Activated CD4-positive, alpha-beta memory T cell treated with anti-CD3 and anti-CD28 coated beads, Interleukin-2, amount 10 ng/mL, durations not matched to agents 7 days and 5 days (primary cell): ENCODE measurements at regions of chr1 and their contacts with region 1.

Region 1: DNA sequence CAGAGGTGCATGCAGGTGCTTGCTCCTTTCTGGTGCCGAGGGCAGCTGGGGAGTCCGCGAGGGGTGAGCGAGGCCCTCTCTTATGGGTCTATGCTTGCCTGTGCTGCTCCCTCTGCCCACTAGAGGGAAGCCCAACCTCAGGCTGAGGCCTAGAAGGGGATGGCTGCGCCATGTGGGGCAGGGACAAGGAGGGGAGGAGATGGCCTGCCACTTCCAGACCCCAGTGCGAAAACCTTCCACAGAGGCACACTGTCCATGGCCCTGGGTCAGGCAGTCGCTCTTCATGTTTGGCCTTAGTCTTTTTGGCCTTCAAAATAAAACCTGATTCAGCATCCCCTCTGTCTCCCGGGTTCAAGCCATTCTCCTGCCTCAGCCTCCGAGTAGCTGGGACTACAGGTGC is 14.0 kb downstream of the RHBG start:
- DNase-seq: peak; percentile 61
- H3K4me3 Mint-ChIP-seq: no peak overlapping the region
- H3K27ac Mint-ChIP-seq: no peak overlapping the region
- H3K4me1 Mint-ChIP-seq: peaks cover 4% of the 10 kb centered on the region
- H3K27me3 Mint-ChIP-seq: peaks cover 16% of the 10 kb centered on the region

Region 2: GRCh38 chr1:156394835-156395461 is 11.9 kb after region 1 on chr1:
- CTCF ChIA-PET with region 1: interaction called, 14 read pairs
- POLR2A ChIA-PET with region 1: no interaction called
- DNase-seq: no peak
- H3K4me3 Mint-ChIP-seq: no peak overlapping the region
- H3K27ac Mint-ChIP-seq: no peak overlapping the region
- H3K4me1 Mint-ChIP-seq: no peaks in the 10 kb centered on the region
- H3K27me3 Mint-ChIP-seq: peaks cover 7% of the 10 kb centered on the region

Region 3: GRCh38 chr1:156421062-156421938 is 38.3 kb after region 1 on chr1:
- CTCF ChIA-PET with region 1: interaction called, 36 read pairs
- POLR2A ChIA-PET with region 1: interaction called, 7 read pairs
- DNase-seq: peak; percentile 79
- H3K4me3 Mint-ChIP-seq: peak overlapping the region; percentile 81
- H3K27ac Mint-ChIP-seq: no peak overlapping the region
- H3K4me1 Mint-ChIP-seq: peaks cover 20% of the 10 kb centered on the region
- H3K27me3 Mint-ChIP-seq: peaks cover 88% of the 10 kb centered on the region

Region 4: GRCh38 chr1:156451505-156452160 is 68.6 kb after region 1 on chr1:
- CTCF ChIA-PET with region 1: interaction called, 330 read pairs
- POLR2A ChIA-PET with region 1: interaction called, 29 read pairs
- DNase-seq: no peak
- H3K4me3 Mint-ChIP-seq: no peak overlapping the region
- H3K27ac Mint-ChIP-seq: no peak overlapping the region
- H3K4me1 Mint-ChIP-seq: peaks cover 24% of the 10 kb centered on the region
- H3K27me3 Mint-ChIP-seq: peaks cover 37% of the 10 kb centered on the region

Region 5: DNA sequence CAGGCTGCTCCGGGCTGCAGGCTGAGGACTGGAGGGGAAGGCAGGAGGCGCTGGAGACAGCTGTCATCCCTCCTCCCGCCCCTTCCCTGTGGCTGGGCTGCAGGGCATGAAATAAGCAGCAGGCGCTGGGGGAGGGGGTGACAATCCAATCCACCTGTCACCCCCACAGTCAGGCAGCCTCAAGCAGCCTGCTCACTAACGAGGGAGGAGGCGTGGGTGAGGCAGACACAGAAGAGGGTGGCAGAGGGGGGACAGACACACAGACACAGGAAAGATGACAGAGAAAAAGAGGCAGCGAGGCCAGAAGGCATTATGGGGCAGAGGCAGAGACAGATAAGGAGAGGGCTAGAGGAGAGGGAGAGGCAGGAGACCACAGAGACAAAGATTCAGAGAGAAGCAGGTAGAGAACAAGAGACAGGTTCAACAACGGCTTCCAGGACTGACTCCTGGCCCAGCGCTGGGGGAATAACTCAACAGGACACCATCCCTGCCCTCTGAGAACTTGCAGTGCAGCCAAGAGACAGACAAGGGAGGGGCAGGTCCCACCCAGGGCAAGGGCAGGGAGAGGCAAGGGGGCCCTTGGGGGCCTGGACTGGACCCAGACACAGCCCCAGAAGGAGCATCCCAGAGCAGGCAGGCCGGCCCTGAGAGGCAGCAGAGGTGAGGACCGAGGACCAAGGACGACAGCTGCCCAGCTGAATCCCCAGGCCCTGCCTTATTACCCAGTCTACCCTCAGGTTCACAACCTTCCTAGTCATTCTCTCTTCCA is 106.3 kb after region 1 on chr1:
- CTCF ChIA-PET with region 1: interaction called, 14 read pairs
- POLR2A ChIA-PET with region 1: no interaction called
- DNase-seq: peak; percentile 43
- H3K4me3 Mint-ChIP-seq: peak overlapping the region; percentile 49
- H3K27ac Mint-ChIP-seq: peak overlapping the region; percentile 65
- H3K4me1 Mint-ChIP-seq: peaks cover 75% of the 10 kb centered on the region
- H3K27me3 Mint-ChIP-seq: no peaks in the 10 kb centered on the region

Region 6: DNA sequence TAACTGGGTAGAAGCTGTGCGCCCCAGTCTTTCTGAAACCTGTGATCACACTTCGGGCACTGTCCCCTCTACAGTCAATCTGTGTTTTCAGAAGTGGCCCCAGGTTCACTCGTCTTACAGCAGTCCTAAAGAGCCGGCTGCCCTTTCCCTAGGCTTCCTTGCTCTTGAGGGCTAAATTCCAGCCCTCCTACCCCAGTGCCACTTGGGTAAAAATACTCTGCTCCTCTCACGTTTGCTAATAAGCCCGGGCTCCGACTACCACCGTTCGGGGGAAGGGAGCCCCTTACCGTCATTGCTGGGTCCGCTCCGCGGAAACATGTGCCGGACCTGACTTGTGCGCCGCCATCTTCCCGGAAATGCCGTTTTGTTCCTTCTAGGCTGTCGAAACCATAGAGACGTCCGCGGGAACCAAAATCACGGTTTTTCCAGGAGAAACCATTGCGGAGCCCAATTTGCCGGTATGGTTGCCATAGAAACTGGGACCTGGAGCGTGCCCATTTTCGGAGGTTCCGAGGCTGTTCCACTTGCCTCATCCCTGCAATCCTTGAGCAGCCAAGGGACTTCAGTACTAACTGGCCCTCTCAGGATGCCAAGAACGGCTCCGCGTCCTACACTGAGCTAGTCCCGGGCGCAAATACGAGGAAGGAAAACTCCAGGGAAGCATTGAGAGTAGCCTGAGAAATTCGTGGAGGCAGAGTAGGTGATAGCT is 218.3 kb after region 1 on chr1 and contains the start of gene GPATCH4:
- CTCF ChIA-PET with region 1: interaction called, 10 read pairs
- POLR2A ChIA-PET with region 1: interaction called, 3 read pairs
- DNase-seq: peak; percentile 88
- H3K4me3 Mint-ChIP-seq: peak within 1 kb of the TSS; percentile 98
- H3K27ac Mint-ChIP-seq: peak within 1 kb of the TSS; percentile 88
- H3K4me1 Mint-ChIP-seq: peaks cover 35% of the 10 kb centered on the region
- H3K27me3 Mint-ChIP-seq: no peaks in the 10 kb centered on the region
- total RNA-seq, gene GPATCH4: 19.0 to 20.6 TPM

Region 7: DNA sequence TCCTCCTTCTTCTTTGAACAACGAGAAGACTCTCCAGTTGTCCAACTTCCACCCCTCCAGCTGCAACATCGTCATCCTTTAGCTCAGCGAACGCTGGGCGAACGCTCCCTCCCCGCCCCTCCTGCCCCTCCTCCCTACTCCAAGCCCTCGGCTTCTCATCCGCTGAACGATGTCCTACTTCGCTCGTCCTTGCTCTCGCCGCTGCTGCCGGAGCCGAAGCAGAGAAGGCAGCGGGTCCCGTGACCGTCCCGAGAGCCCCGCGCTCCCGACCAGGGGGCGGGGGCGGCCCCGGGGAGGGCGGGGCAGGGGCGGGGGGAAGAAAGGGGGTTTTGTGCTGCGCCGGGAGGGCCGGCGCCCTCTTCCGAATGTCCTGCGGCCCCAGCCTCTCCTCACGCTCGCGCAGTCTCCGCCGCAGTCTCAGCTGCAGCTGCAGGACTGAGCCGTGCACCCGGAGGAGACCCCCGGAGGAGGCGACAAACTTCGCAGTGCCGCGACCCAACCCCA is 258.8 kb after region 1 on chr1 and contains the start of gene BCAN:
- CTCF ChIA-PET with region 1: no interaction called
- POLR2A ChIA-PET with region 1: no interaction called
- DNase-seq: no peak
- H3K4me3 Mint-ChIP-seq: no peak within 1 kb of the TSS
- H3K27ac Mint-ChIP-seq: peak within 1 kb of the TSS; percentile 49
- H3K4me1 Mint-ChIP-seq: peaks cover 42% of the 10 kb centered on the region
- H3K27me3 Mint-ChIP-seq: peaks cover 82% of the 10 kb centered on the region
- total RNA-seq, gene BCAN: not detected